ENCODE measurements at regions of chr5 and their contacts with region 1.

Region 1: GRCh38 chr5:41903892-41904799 is at the start of gene RIMOC1:
- DNase-seq: peak; percentile 95 to 99 (median 98)
- H3K4me3 ChIP-seq: peak within 1 kb of the TSS; percentile 91
- H3K4me3 Mint-ChIP-seq: peak within 1 kb of the TSS; percentile 95 to 99 (median 97)
- H3K27ac ChIP-seq: peak within 1 kb of the TSS; percentile 83
- H3K27ac Mint-ChIP-seq: peak within 1 kb of the TSS; percentile 97 to 99 (median 98)
- H3K4me1 ChIP-seq: peaks cover 27% of the 10 kb centered on the region
- H3K4me1 Mint-ChIP-seq: peaks cover 36 to 54% (median 49%) of the 10 kb centered on the region in 3 donors
- H3K27me3 ChIP-seq: no peaks in the 10 kb centered on the region
- H3K27me3 Mint-ChIP-seq: peaks cover 0 to 4% of the 10 kb centered on the region in 2 donors
- total RNA-seq, gene RIMOC1: 34.6 to 36.5 TPM

Region 2: GRCh38 chr5:41924872-41925554 is 20.9 kb after region 1 on chr5 and contains the start of gene FBXO4:
- CTCF ChIA-PET with region 1: interaction called, 5 read pairs
- POLR2A ChIA-PET with region 1: interaction called, 46 read pairs
- DNase-seq: peak; percentile 79 to 93 (median 89)
- H3K4me3 ChIP-seq: peak within 1 kb of the TSS; percentile 78
- H3K4me3 Mint-ChIP-seq: peak within 1 kb of the TSS; percentile 72 to 96 (median 81)
- H3K27ac ChIP-seq: peak within 1 kb of the TSS; percentile 98
- H3K27ac Mint-ChIP-seq: peak within 1 kb of the TSS; percentile 84 to 99 (median 96)
- H3K4me1 ChIP-seq: peaks cover 12% of the 10 kb centered on the region
- H3K4me1 Mint-ChIP-seq: peaks cover 19 to 30% (median 25%) of the 10 kb centered on the region in 3 donors
- H3K27me3 ChIP-seq: no peaks in the 10 kb centered on the region
- H3K27me3 Mint-ChIP-seq: no peaks in the 10 kb centered on the region
- total RNA-seq, gene FBXO4: 15.8 to 18.0 TPM